Dorsolateral prefrontal cortex (tissue), 120 donors: ENCODE measurements at regions of chr2 and their contacts with region 1.

Region 1: DNA sequence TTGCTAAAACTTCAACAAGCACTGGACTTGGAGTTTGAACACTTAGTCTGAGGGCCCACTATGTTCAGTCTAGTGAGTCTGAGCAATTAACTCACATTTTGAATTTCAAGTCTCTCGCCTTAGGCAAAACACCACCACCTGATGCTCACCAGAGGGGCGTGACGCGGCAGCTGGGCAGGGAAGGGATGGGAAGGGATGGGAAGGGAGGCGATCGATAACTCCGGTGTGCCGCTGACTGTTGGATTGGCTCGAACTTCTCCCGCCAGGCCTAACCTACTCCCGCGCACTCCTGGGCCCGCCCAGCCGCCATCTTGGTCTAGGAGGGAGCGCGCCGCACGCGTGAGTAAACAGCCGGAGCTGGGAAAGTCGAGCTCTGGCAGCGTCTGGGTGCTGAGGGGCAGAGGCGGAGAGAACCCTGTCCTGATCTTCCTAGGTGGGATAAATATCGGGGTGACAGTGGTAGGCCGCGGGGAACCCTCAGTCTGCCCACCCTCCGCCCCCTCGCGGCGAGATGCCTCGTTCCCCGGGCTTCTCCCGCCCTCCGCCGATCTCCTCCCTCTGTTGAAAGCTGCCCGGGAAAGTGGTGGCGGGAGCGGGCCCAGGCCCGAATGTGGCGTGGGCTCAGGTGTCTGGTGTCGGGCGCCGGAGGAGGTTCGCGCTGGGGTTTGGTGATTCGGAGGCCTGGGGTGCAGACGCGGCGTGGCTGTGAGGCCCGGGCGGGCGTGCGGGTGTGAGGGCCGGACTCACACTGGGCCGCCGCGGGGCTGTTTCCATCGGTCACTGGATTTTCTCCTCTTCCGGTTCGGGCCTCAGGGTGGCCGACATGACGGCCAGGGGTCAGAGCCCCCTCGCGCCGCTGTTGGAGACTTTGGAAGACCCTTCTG is at the start of gene RIF1:
- DNase-seq: peak; percentile 66 to 91 (median 86)
- H3K4me3 ChIP-seq: peak within 1 kb of the TSS; percentile 71 to 100 (median 94)
- H3K27ac ChIP-seq: peak within 1 kb of the TSS; percentile 74 to 99 (median 95)
- H3K27me3 ChIP-seq: no peaks in the 10 kb centered on the region
- CTCF ChIP-seq: peak in 55 of 56 donors; percentile 50 to 88 (median 71)
- total RNA-seq, gene RIF1: 32.4 to 72.5 (median 55.9) TPM

Region 2: DNA sequence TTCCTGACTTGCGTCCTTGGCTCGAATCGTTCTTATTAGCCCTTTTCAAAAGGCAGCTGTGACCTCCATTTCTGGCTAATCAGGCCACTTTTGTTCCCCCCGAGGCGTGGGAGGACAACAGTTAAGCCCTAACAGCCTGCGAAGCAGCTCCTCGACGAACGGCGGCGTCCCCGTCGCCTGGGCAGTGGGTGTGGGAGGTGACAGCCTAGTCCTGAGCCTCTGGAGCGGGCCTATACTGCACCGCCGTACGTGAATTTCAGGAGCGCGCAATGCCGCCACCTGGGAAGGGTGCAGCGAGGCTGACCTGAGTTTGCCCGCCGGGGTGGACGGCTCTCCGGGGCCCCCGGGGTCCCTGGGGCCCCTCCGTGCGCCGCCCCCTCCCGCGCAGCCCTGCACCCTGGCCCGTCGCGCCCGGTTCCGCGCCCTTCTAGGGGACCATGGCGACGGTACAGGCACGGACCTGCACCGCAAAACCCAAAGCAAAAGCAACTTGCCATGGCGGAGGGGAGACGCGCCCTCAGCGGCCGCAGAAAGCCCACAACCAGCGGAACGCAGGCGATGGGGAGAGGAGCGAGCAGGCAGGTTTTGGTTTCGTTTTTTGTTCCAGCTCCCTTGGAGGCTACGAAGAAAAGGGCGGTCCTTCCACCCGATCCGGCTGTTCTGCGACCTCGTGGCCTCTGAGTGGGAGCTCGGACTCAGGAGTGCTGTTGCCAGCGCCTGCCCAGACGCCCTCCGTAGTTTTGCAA is 148.4 kb before region 1 on chr2 and contains the start of gene RBM43:
- intact Hi-C with region 1: loop called (anchors 1 to 5 kb)
- DNase-seq: peak; percentile 23 to 84 (median 68)
- H3K4me3 ChIP-seq: peak within 1 kb of the TSS; percentile 64 to 97 (median 85)
- H3K27ac ChIP-seq: peak within 1 kb of the TSS; percentile 66 to 97 (median 89)
- H3K27me3 ChIP-seq: no peaks in the 10 kb centered on the region
- CTCF ChIP-seq: peak in 23 of 56 donors; percentile 2 to 39 (median 13)
- total RNA-seq, gene RBM43: 2.0 to 7.1 (median 4.5) TPM

Region 3: DNA sequence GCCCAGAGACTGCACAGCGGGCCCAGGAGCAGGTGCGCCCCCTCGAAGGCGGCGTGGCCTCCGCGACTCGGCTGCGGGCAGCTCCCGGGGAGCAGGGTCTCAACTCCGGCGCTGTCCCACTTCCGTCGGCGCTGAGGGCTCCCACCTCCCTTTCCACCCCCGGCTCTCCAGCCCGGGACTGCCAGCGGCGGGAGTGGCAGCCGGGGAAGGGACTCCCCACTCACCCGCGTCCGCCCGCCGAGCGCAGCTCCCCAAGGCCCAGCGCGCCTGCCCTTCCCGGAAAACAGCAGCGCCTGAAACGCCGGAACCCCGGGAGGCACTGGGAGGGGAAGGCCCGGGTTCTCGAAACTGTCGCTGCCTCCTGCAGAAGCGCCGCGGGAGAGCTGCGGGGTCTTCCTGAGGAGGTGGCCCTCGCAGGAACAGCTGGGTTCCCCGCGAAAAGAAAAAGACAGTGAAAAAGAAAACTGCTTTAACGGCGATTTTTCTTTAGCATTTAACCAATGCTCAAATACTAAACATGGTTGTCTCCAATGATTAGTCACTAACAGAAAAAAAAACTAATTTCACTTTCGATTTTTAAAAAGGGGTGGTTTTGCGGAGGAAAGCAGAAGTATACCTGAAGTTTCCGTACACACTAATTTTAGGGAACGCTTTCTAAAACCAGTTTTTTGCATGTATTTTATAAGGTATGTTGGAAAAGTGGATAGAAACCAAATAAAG is 120.3 kb before region 1 on chr2 and contains the start of gene NMI:
- intact Hi-C with region 1: loop called in 1 of 2 experiments (anchors 5 kb)
- DNase-seq: peak in 8 of 10 donors; percentile 22 to 74 (median 47)
- H3K4me3 ChIP-seq: peak within 1 kb of the TSS; percentile 59 to 85 (median 72)
- H3K27ac ChIP-seq: peak within 1 kb of the TSS in 58 of 59 donors; percentile 55 to 96 (median 88)
- H3K27me3 ChIP-seq: peaks cover 0 to 10% (median 0%) of the 10 kb centered on the region in 45 donors
- CTCF ChIP-seq: peak in 10 of 56 donors; percentile 2 to 40 (median 22)
- total RNA-seq, gene NMI: 0.68 to 9.3 (median 2.9) TPM

Region 4: GRCh38 chr2:151357359-151357758 is 52.5 kb before region 1 on chr2 and contains the start of gene TNFAIP6:
- intact Hi-C with region 1: loop called in 1 of 2 experiments (anchors 5 kb)
- DNase-seq: no peak
- H3K4me3 ChIP-seq: peak within 1 kb of the TSS in 36 of 59 donors; percentile 3 to 62 (median 19)
- H3K27ac ChIP-seq: peak within 1 kb of the TSS in 3 of 59 donors; percentile 19 to 48 (median 45)
- H3K27me3 ChIP-seq: no peaks in the 10 kb centered on the region
- CTCF ChIP-seq: no peak
- total RNA-seq, gene TNFAIP6: 0.39 to 6.6 (median 1.5) TPM in 116 of 120 experiments, not detected in the others